IMR-90 (cell line): ENCODE measurements at regions of chr4 and their contacts with region 1.

Region 1: DNA sequence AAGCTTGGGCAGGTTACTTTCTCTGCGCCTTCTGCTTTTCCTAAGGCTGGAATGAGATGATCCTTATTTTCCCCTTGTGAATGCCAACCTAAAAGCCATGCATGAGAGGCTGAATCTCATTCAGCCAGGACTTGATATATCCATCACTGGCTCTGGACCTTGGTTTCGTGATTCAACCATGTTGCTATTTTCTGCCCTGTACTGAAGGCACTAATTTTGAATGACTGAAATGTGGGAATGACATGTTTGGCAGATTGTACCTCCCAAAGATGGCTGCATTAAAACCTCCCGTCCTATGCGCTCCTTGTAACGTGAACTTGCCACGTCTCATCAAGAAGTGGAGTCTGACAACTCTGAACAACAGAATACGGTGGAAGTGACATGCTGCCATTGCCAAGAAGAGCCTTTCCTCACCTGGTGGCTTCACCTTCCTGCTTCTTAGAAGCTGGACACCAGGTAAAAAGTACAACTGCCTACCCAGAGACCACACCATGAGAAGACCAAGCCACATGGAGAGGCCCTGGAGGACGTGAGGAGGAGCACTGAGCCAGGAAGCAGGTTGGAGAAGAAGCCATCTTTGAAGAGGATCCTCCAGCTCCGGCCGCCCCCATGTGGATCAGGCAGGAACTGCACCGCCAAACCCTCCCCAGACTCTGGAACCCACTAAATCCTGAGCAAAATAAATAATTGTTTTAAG is 174.5 kb downstream of the NSUN7 start:
- DNase-seq: peak; percentile 49
- ATAC-seq: peak; percentile 92
- H3K4me3 ChIP-seq: no peak overlapping the region
- H3K27ac ChIP-seq: no peak overlapping the region
- H3K4me1 ChIP-seq: no peaks in the 10 kb centered on the region
- H3K27me3 ChIP-seq: no peaks in the 10 kb centered on the region
- CTCF ChIP-seq: peak; percentile 88
- POLR2A ChIP-seq: no peak
- RAD21 ChIP-seq: peak; percentile 82

Region 2: GRCh38 chr4:40782876-40783275 is 141.4 kb before region 1 on chr4:
- CTCF ChIA-PET with region 1: no interaction called
- POLR2A ChIA-PET with region 1: no interaction called
- dilution Hi-C with region 1: no loop called
- in situ Hi-C with region 1: no loop called
- intact Hi-C with region 1: no loop called
- DNase-seq: no peak
- ATAC-seq: no peak
- H3K4me3 ChIP-seq: no peak overlapping the region
- H3K27ac ChIP-seq: no peak overlapping the region
- H3K4me1 ChIP-seq: no peaks in the 10 kb centered on the region
- H3K27me3 ChIP-seq: peaks cover 4% of the 10 kb centered on the region
- CTCF ChIP-seq: no peak
- POLR2A ChIP-seq: no peak
- RAD21 ChIP-seq: no peak

Region 3: GRCh38 chr4:40908702-40909362 is 15.4 kb before region 1 on chr4:
- CTCF ChIA-PET with region 1: interaction called, 4 read pairs
- POLR2A ChIA-PET with region 1: no interaction called
- dilution Hi-C with region 1: no loop called
- in situ Hi-C with region 1: no loop called
- intact Hi-C with region 1: loop called (anchors 1 kb)
- DNase-seq: peak; percentile 76
- ATAC-seq: peak; percentile 80
- H3K4me3 ChIP-seq: no peak overlapping the region
- H3K27ac ChIP-seq: no peak overlapping the region; the same call in 1 of the 2 replicates
- H3K4me1 ChIP-seq: peaks cover 12% of the 10 kb centered on the region
- H3K27me3 ChIP-seq: no peaks in the 10 kb centered on the region
- CTCF ChIP-seq: peak; percentile 89
- POLR2A ChIP-seq: no peak
- RAD21 ChIP-seq: peak; percentile 83

Region 4: DNA sequence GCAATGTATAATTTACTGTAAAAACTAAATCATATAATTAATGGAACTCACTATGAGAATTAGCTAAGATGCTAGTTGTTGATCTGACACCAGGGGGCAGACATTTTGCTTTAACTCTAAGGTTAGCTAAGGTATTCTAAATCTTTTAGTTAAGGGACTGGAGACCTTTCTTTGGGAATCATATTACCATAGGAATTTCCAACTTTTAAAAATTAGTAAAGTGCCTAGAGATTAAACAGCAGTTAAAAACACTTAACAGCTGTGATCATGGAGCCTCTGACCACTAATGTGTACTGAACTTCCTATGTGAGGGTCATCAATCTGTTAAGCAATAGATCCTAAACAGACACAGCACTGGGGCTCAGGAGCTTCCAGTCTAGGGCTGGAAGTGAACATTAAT is 52.1 kb after region 1 on chr4:
- CTCF ChIA-PET with region 1: interaction called, 5 read pairs
- POLR2A ChIA-PET with region 1: no interaction called
- dilution Hi-C with region 1: no loop called
- in situ Hi-C with region 1: no loop called
- intact Hi-C with region 1: loop called (anchors 2 kb)
- DNase-seq: peak; percentile 70
- ATAC-seq: peak; percentile 31; the same call in 1 of the 2 replicates
- H3K4me3 ChIP-seq: no peak overlapping the region
- H3K27ac ChIP-seq: peak overlapping the region; percentile 13; the same call in 1 of the 2 replicates
- H3K4me1 ChIP-seq: peaks cover 21% of the 10 kb centered on the region
- H3K27me3 ChIP-seq: no peaks in the 10 kb centered on the region
- CTCF ChIP-seq: peak; percentile 67
- POLR2A ChIP-seq: no peak
- RAD21 ChIP-seq: peak; percentile 73

Region 5: DNA sequence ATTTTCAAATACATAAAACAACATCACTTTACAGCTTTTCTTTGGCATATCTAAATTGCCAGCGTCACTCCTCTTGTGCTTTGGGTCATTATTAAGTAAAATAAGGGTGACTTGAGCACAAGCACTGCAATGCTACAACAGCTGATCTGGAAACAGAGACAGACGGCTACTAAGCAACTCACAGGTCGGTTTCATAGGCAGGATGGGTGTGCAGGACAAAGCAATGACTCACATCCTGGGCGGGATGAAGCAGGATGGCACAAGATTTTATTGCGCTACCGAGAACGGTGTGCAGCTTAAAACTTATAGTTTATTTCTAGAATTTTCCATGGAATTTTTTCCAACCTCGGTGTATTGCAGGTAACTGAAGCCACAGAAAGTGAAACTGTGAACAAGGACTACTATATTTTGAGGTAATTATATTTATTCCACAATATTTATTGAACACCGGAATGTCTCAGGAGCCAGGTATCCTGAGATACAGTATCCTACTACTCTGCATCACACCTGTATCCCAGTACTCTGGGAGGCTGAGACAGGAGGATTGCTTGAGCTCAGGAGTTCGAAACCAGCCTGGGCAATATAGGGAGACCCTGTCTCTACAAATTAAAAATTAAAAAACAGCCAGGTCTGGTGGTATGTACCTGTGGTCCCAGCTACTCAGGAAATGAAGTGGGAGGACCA is 74.6 kb after region 1 on chr4:
- CTCF ChIA-PET with region 1: no interaction called
- POLR2A ChIA-PET with region 1: no interaction called
- dilution Hi-C with region 1: no loop called
- in situ Hi-C with region 1: no loop called
- intact Hi-C with region 1: no loop called
- DNase-seq: peak; percentile 20
- ATAC-seq: no peak
- H3K4me3 ChIP-seq: no peak overlapping the region
- H3K27ac ChIP-seq: no peak overlapping the region
- H3K4me1 ChIP-seq: no peaks in the 10 kb centered on the region; the same call in 1 of the 2 replicates
- H3K27me3 ChIP-seq: no peaks in the 10 kb centered on the region
- CTCF ChIP-seq: no peak
- POLR2A ChIP-seq: no peak
- RAD21 ChIP-seq: no peak

Region 6: GRCh38 chr4:41143311-41144039 is 219.2 kb after region 1 on chr4:
- CTCF ChIA-PET with region 1: interaction called, 4 read pairs
- POLR2A ChIA-PET with region 1: no interaction called
- dilution Hi-C with region 1: no loop called
- in situ Hi-C with region 1: no loop called
- intact Hi-C with region 1: loop called (anchors 10 kb)
- DNase-seq: peak; percentile 92
- ATAC-seq: peak; percentile 78
- H3K4me3 ChIP-seq: no peak overlapping the region
- H3K27ac ChIP-seq: peak overlapping the region; percentile 97
- H3K4me1 ChIP-seq: peaks cover 35% of the 10 kb centered on the region
- H3K27me3 ChIP-seq: no peaks in the 10 kb centered on the region
- CTCF ChIP-seq: no peak
- POLR2A ChIP-seq: no peak
- RAD21 ChIP-seq: no peak

Region 7: GRCh38 chr4:41257257-41257901 is 333.1 kb after region 1 on chr4:
- CTCF ChIA-PET with region 1: interaction called, 3 read pairs
- POLR2A ChIA-PET with region 1: interaction called, 4 read pairs
- dilution Hi-C with region 1: no loop called
- in situ Hi-C with region 1: no loop called
- intact Hi-C with region 1: loop called (anchors 2 kb)
- DNase-seq: peak; percentile 52
- ATAC-seq: peak; percentile 69
- H3K4me3 ChIP-seq: peak overlapping the region; percentile 94
- H3K27ac ChIP-seq: peak overlapping the region; percentile 84
- H3K4me1 ChIP-seq: peaks cover 4% of the 10 kb centered on the region
- H3K27me3 ChIP-seq: no peaks in the 10 kb centered on the region
- CTCF ChIP-seq: no peak
- POLR2A ChIP-seq: no peak
- RAD21 ChIP-seq: no peak

Region 8: GRCh38 chr4:41644288-41644914 is 720.2 kb after region 1 on chr4:
- CTCF ChIA-PET with region 1: no interaction called
- POLR2A ChIA-PET with region 1: no interaction called
- dilution Hi-C with region 1: no loop called
- in situ Hi-C with region 1: no loop called
- intact Hi-C with region 1: loop called (anchors 10 kb)
- DNase-seq: peak; percentile 16
- ATAC-seq: peak; percentile 82
- H3K4me3 ChIP-seq: no peak overlapping the region
- H3K27ac ChIP-seq: no peak overlapping the region
- H3K4me1 ChIP-seq: no peaks in the 10 kb centered on the region
- H3K27me3 ChIP-seq: peaks cover 20% of the 10 kb centered on the region
- CTCF ChIP-seq: peak; percentile 52
- POLR2A ChIP-seq: no peak
- RAD21 ChIP-seq: peak; percentile 46